ENCODE measurements at regions of chr6 and their contacts with region 1.

Region 1: GRCh38 chr6:159789377-159790148 is at the start of gene TCP1:
- DNase-seq: peak; percentile 98
- H3K4me3 Mint-ChIP-seq: peak within 1 kb of the TSS; percentile 86
- H3K27ac Mint-ChIP-seq: peak within 1 kb of the TSS; percentile 98
- H3K4me1 Mint-ChIP-seq: peaks cover 44% of the 10 kb centered on the region
- H3K27me3 Mint-ChIP-seq: no peaks in the 10 kb centered on the region
- CTCF ChIP-seq: no peak
- total RNA-seq, gene TCP1: 311 and 357 TPM in 2 replicates

Region 2: DNA sequence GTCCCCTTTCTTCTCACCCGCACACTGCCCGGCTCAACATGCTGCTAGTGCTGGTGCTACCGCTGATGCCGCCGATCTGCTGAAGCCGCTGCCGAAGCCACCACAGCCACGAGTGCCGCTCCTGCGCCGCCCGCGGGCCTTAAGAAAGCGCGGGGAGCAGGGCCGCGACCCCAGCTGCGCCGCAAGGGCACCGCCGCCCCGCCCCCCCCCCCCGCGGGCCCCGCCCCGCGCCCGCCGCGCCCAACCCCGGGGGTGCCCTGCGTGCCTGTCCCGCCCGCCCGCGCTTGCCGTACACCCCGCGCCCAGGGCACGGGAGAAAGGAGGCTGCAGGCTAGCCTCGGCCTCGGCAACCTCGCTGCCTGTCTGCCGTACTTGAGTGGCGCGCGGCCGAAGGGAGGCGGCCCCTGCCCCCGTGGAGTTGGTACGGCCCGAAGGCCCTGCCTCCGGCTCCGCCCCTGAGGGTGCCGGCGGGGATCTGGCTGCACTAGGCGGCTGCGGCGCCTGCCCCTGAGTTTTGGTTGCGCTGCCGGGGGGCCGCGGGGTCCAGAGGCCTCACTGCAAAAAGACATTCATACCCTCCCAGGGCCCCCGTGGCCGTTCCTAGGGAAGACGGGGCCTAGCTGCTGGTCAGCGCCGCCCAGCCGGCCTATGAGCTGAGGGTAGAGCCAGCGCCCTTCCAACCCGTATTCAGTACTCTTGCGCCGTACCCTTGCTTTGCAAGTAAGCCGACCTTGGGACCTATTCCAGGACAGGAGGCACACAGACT is 96.3 kb before region 1 on chr6 and contains the start of gene SOD2:
- CTCF ChIA-PET with region 1: interaction called, 6 read pairs
- intact Hi-C with region 1: loop called (anchors 5 kb)
- DNase-seq: peak; percentile 86
- H3K4me3 Mint-ChIP-seq: peak within 1 kb of the TSS; percentile 67
- H3K27ac Mint-ChIP-seq: peak within 1 kb of the TSS; percentile 80
- H3K4me1 Mint-ChIP-seq: peaks cover 29% of the 10 kb centered on the region
- H3K27me3 Mint-ChIP-seq: no peaks in the 10 kb centered on the region
- CTCF ChIP-seq: no peak
- total RNA-seq, gene SOD2: 143 and 202 TPM in 2 replicates

Region 3: GRCh38 chr6:159726918-159727716 is 62.4 kb before region 1 on chr6 and contains the start of gene WTAP:
- CTCF ChIA-PET with region 1: interaction called, 16 read pairs
- intact Hi-C with region 1: loop called (anchors 5 kb)
- DNase-seq: peak; percentile 98
- H3K4me3 Mint-ChIP-seq: peak within 1 kb of the TSS; percentile 91
- H3K27ac Mint-ChIP-seq: peak within 1 kb of the TSS; percentile 88
- H3K4me1 Mint-ChIP-seq: no peaks in the 10 kb centered on the region
- H3K27me3 Mint-ChIP-seq: no peaks in the 10 kb centered on the region
- CTCF ChIP-seq: no peak
- total RNA-seq, gene WTAP: 91.8 and 103 TPM in 2 replicates

Region 4: DNA sequence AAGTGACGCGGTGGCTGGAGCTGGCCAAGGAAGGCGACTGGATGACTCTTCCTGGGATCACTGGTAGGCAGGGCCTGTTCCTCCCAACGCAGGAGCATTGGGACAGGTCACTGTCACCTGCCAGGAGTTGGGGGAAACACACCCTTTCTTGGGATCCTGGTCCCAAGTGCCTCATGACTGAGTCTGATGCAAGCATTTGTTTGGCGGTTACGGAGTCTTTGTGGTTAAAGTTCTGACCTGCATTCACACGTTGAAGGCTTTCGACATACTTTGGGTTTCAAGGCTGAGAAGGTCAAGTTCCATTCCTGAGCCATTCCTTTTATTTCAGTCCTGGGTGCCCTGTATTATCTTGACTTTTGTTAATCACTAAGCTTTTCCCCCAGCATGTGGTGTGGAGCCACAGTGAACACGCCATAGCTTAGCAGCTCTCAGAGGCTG is 16.5 kb after region 1 on chr6:
- CTCF ChIA-PET with region 1: interaction called, 14 read pairs
- intact Hi-C with region 1: loop called (anchors 1 kb)
- DNase-seq: peak; percentile 55
- H3K4me3 Mint-ChIP-seq: no peak overlapping the region
- H3K27ac Mint-ChIP-seq: peak overlapping the region; percentile 44
- H3K4me1 Mint-ChIP-seq: peaks cover 29% of the 10 kb centered on the region
- H3K27me3 Mint-ChIP-seq: peaks cover 11% of the 10 kb centered on the region
- CTCF ChIP-seq: no peak

Region 5: DNA sequence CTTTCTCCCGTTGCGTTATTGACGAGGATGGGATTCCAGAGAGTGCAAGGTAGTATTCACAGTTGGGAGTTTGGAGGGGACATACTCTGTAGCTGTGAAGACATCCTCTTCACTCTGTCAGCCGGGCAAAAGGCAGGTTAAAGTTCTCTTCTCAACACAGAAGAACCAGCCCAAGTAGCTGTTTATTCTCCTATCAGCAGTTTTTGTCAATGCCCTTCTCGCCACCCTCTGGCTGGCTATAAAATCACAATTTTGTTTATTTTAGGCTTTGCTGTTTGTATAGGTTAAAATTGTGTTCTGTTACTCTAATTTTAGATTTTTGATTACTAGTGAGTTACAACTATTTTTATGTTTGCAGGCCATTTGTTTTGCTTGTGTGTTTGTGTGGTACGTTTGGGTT is 63.3 kb after region 1 on chr6:
- CTCF ChIA-PET with region 1: interaction called, 9 read pairs
- intact Hi-C with region 1: loop called (anchors 5 kb)
- DNase-seq: peak; percentile 37
- H3K4me3 Mint-ChIP-seq: no peak overlapping the region
- H3K27ac Mint-ChIP-seq: no peak overlapping the region
- H3K4me1 Mint-ChIP-seq: no peaks in the 10 kb centered on the region
- H3K27me3 Mint-ChIP-seq: peaks cover 20% of the 10 kb centered on the region
- CTCF ChIP-seq: no peak

Region 6: GRCh38 chr6:159890792-159891191 is 101.2 kb after region 1 on chr6 and contains the start of gene MAS1:
- CTCF ChIA-PET with region 1: no interaction called
- intact Hi-C with region 1: no loop called
- DNase-seq: no peak
- H3K4me3 Mint-ChIP-seq: no peak within 1 kb of the TSS
- H3K27ac Mint-ChIP-seq: no peak within 1 kb of the TSS
- H3K4me1 Mint-ChIP-seq: no peaks in the 10 kb centered on the region
- H3K27me3 Mint-ChIP-seq: peaks cover 92% of the 10 kb centered on the region
- CTCF ChIP-seq: no peak
- total RNA-seq, gene MAS1: not detected in 2 replicates

Region 7: GRCh38 chr6:159904497-159904911 is 114.9 kb after region 1 on chr6:
- CTCF ChIA-PET with region 1: no interaction called
- intact Hi-C with region 1: no loop called
- DNase-seq: no peak
- H3K4me3 Mint-ChIP-seq: no peak overlapping the region
- H3K27ac Mint-ChIP-seq: no peak overlapping the region
- H3K4me1 Mint-ChIP-seq: peaks cover 9% of the 10 kb centered on the region
- H3K27me3 Mint-ChIP-seq: peaks cover 19% of the 10 kb centered on the region
- CTCF ChIP-seq: no peak

Region 8: DNA sequence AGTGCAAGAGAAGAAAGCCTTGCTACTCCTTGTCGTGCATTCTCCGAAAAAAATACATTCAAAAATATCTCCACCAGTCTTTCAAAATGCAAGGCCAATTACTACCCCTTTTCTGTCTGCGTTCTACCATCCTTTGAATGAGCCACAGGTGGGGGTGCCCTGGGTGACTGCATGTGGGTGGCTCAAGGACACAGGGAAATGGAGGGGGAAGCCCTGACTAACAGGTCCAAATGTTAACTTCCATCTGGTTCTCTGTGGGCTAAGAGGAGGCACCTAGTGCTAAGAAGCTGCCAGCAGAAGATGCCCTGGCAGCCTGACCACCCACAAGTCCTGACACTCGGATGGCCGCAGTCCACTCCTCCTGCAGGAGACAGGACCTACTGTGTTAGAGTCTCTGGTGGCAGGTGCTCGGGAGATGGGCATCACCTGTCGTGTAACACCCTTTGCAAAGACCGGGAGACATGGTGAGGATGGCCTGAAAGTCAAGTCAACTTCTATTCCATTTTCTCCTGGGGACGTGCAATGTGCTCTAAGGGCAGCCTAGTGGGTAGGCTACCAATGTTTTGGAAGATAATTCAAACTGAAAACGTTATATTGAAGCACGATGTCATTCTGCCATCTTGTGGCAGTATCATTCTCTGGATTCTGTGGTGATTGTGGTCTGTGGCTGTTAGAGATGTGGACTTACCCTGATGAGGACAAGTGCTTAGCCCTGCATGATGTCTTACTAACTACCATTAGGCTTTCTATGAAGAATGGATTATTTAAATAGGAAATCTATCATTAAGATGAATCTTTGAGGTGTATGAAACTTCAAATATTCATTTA is 151.9 kb after region 1 on chr6:
- CTCF ChIA-PET with region 1: no interaction called
- intact Hi-C with region 1: loop called (anchors 5 kb)
- DNase-seq: peak; percentile 24
- H3K4me3 Mint-ChIP-seq: no peak overlapping the region
- H3K27ac Mint-ChIP-seq: no peak overlapping the region
- H3K4me1 Mint-ChIP-seq: no peaks in the 10 kb centered on the region
- H3K27me3 Mint-ChIP-seq: peaks cover 24% of the 10 kb centered on the region
- CTCF ChIP-seq: no peak

Region 9: GRCh38 chr6:160010067-160010466 is 220.5 kb after region 1 on chr6:
- CTCF ChIA-PET with region 1: no interaction called
- intact Hi-C with region 1: no loop called
- DNase-seq: no peak
- H3K4me3 Mint-ChIP-seq: no peak overlapping the region
- H3K27ac Mint-ChIP-seq: no peak overlapping the region
- H3K4me1 Mint-ChIP-seq: no peaks in the 10 kb centered on the region
- H3K27me3 Mint-ChIP-seq: no peaks in the 10 kb centered on the region
- CTCF ChIP-seq: no peak

Measured in Calu3 (cell line).